Activated CD4-positive, alpha-beta memory T cell treated with anti-CD3 and anti-CD28 coated beads, Interleukin-2, amount 10 ng/mL, durations not matched to agents 7 days and 5 days (primary cell): ENCODE measurements at regions of chr6 and their contacts with region 1.

Region 1: GRCh38 chr6:40328405-40328987 is 258.7 kb downstream of the LRFN2 start:
- DNase-seq: peak; percentile 31
- H3K4me3 Mint-ChIP-seq: no peak overlapping the region
- H3K27ac Mint-ChIP-seq: no peak overlapping the region
- H3K4me1 Mint-ChIP-seq: no peaks in the 10 kb centered on the region
- H3K27me3 Mint-ChIP-seq: peaks cover 5% of the 10 kb centered on the region

Region 2: DNA sequence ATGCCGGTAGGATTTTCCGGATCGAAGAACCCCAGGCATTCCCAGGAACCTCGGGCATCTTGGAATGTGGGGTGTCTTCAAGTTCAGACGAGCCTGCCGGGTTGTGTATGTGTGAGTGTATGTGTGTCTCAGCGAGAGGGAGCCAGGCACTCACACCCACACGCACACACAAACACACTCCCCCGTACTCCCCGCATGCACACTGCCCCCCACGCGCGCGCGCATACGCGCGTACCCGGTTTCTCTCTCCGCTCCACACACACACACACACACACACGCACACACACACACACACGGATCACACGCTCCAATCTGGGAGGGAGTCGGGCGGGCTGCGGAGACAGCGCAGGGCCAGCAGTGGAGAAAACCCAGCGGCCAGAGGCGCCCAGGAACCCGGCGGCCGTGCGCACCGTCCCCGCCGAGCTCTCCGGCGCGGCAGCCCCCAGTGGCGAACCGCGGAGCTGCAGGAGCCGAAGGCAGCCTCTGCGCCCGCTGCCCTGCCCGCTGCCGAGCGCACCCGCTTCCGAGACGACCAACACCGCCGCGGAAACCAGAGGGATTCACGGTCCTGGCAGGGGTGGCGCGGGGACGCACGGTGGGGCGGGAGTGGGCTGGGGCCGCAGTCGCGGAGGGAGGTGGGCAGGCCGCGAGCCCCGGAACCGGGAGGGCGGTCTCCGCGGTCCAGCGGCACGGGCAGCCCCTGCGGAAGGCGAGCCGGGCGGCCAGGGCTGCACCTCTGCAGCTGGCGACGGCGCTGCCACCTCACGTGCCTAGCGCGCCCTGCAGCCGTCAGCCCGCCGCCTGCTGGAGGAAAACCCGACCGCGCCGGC is 259.0 kb after region 1 on chr6 and contains the start of gene LRFN2:
- CTCF ChIA-PET with region 1: interaction called, 11 read pairs
- POLR2A ChIA-PET with region 1: no interaction called
- DNase-seq: peak; percentile 65
- H3K4me3 Mint-ChIP-seq: peak within 1 kb of the TSS; percentile 54
- H3K27ac Mint-ChIP-seq: no peak within 1 kb of the TSS
- H3K4me1 Mint-ChIP-seq: peaks cover 10% of the 10 kb centered on the region
- H3K27me3 Mint-ChIP-seq: peaks cover 50% of the 10 kb centered on the region
- total RNA-seq, gene LRFN2: 0.08 TPM in 1 of 2 experiments, not detected in the other